Ascending aorta (tissue), 2 donors: ENCODE measurements at regions of chr6 and their contacts with region 1.

Region 1: DNA sequence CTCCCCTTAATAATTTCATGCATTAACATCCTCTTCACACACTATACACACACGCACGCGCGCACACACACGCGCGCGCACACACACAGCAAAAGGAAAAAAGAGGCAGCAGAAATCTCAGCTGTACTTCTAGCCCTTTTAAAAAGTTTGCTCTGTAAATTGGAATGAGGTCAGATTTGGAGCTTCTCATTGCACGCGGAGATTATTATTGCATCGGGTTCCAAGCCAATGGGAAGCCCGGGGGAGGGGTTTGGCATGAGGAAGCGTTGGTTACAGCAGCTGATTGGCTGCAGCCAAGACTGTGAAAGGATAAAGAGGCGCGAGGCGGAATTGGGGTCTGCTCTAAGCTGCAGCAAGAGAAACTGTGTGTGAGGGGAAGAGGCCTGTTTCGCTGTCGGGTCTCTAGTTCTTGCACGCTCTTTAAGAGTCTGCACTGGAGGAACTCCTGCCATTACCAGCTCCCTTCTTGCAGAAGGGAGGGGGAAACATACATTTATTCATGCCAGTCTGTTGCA is at the start of gene SOX4:
- DNase-seq: peak; percentile 75 to 96
- H3K4me3 ChIP-seq: peak within 1 kb of the TSS; percentile 78
- H3K27ac ChIP-seq: peak within 1 kb of the TSS; percentile 91 to 97
- H3K4me1 ChIP-seq: peaks cover 0 to 4% of the 10 kb centered on the region in 2 donors
- H3K27me3 ChIP-seq: no peaks in the 10 kb centered on the region
- CTCF ChIP-seq: no peak
- total RNA-seq, gene SOX4: 10.4 TPM

Region 2: DNA sequence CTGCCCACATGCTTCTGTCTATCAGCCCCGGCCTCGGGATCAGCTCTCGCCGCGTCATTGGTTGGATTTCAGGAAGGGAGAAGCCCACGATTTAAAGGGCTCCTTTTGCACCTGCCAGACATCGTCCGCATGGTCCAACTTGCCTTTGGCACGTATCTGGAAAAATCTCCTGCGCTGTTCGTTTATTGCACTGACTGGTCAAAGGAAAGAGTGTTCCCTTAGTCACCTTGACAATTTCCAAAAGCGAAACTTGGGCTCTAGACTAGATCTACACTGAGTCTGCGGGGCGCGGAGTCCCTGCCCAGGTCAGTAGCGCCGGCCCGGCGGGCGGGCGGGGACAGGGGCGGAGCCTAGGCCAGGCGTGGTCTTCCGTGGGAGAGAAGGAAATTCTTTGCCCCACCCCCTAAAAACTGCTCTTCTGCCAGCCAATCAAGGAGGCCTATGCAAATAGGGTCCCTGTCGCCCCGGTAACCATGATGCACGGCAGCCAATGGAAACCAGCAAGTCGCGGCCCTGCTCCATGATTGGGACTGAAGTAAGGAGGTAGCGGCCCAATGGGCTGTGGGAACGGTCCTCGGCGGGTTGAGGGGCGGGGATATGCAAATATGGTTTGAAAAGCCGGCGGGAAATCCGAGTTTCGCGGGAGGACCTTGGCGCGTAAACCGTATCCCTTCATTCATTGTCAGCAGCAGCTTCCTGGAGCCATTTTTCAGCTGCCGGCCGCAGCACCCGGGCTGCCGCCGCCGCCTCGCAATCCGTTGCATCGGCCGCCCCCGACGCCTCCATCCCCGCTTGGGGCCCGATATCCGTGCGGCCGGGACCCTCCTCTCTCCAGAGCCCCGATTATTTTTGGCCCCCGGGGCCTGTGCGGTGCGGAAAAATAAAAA is 1192.0 kb before region 1 on chr6 and contains the start of gene E2F3:
- intact Hi-C with region 1: loop called (anchors 5 kb)
- DNase-seq: peak; percentile 100
- H3K4me3 ChIP-seq: peak within 1 kb of the TSS; percentile 83
- H3K27ac ChIP-seq: peak within 1 kb of the TSS; percentile 95
- H3K4me1 ChIP-seq: peaks cover 0 to 3% of the 10 kb centered on the region in 2 donors
- H3K27me3 ChIP-seq: no peaks in the 10 kb centered on the region
- CTCF ChIP-seq: no peak
- total RNA-seq, gene E2F3: 1.1 TPM

Region 3: DNA sequence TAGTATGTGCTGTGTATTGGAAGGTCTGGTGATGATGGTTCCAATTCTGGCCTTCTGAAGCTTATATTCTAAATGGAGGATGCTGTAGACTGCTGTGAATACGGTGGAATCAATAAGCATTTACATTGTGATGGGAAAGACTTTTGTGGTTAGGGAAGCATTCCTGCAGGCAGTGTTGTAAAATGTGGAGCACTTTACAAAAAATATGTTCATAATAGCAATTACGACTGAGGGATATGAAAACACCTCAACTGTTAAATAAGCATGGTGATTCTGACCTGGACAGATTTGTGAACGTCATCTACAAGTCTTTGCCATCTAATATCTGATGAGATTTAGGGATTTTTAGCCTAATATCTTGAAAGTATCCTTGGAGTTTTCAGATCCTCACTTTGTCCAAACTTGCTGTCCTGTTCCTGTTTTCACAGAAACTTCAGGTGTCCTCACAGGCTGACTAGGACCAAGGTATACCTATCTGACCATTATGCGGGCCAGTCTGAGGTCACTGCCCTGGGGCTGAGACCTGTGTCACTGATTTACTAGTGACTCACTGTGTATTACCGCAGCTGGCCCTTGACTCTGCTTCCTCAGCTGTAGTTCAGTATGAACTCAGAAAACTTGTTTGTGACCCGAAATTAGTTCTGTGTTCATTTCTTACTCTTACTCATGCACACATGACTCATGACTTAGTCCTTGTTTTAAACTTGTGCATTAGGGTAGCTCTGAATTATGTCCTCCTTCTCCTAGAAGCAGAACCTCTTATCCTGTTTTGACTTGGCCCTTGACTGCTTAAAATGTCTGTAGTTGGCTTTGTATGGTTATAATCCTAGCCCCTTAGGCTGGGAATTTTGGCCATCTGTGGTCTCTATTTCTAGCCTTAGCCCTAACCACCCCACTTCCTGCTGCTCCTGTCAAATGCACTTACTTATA is 716.2 kb before region 1 on chr6:
- intact Hi-C with region 1: loop called (anchors 5 kb)
- DNase-seq: peak; percentile 57 to 80
- H3K4me3 ChIP-seq: no peak overlapping the region
- H3K27ac ChIP-seq: peak overlapping the region; percentile 62 to 73
- H3K4me1 ChIP-seq: no peaks in the 10 kb centered on the region
- H3K27me3 ChIP-seq: no peaks in the 10 kb centered on the region
- CTCF ChIP-seq: no peak

Region 4: GRCh38 chr6:21468461-21468860 is 125.0 kb before region 1 on chr6:
- intact Hi-C with region 1: no loop called
- DNase-seq: no peak
- H3K4me3 ChIP-seq: no peak overlapping the region
- H3K27ac ChIP-seq: no peak overlapping the region
- H3K4me1 ChIP-seq: no peaks in the 10 kb centered on the region
- H3K27me3 ChIP-seq: no peaks in the 10 kb centered on the region
- CTCF ChIP-seq: no peak

Region 5: GRCh38 chr6:21664314-21665109 is 71.0 kb after region 1 on chr6:
- intact Hi-C with region 1: loop called (anchors 2 kb)
- DNase-seq: no peak
- H3K4me3 ChIP-seq: peak overlapping the region; percentile 66 to 76
- H3K27ac ChIP-seq: peak overlapping the region; percentile 52 to 66
- H3K4me1 ChIP-seq: peaks cover 0 to 10% of the 10 kb centered on the region in 2 donors
- H3K27me3 ChIP-seq: no peaks in the 10 kb centered on the region
- CTCF ChIP-seq: peak in 1 of 3 experiments; percentile 10

Region 6: GRCh38 chr6:21946298-21946783 is 352.9 kb after region 1 on chr6:
- intact Hi-C with region 1: loop called (anchors 10 kb)
- DNase-seq: no peak
- H3K4me3 ChIP-seq: no peak overlapping the region
- H3K27ac ChIP-seq: peak overlapping the region; percentile 28 to 51
- H3K4me1 ChIP-seq: peaks cover 0 to 15% of the 10 kb centered on the region in 2 donors
- H3K27me3 ChIP-seq: no peaks in the 10 kb centered on the region
- CTCF ChIP-seq: no peak

Region 7: GRCh38 chr6:22892452-22892851 is 1299.0 kb after region 1 on chr6:
- intact Hi-C with region 1: loop called (anchors 10 kb)
- DNase-seq: no peak
- H3K4me3 ChIP-seq: no peak overlapping the region
- H3K27ac ChIP-seq: peak overlapping the region; percentile 80 to 86
- H3K4me1 ChIP-seq: peaks cover 0 to 10% of the 10 kb centered on the region in 2 donors
- H3K27me3 ChIP-seq: no peaks in the 10 kb centered on the region
- CTCF ChIP-seq: no peak